ENCODE measurements at regions of chr10 and their contacts with region 1.

Region 1: DNA sequence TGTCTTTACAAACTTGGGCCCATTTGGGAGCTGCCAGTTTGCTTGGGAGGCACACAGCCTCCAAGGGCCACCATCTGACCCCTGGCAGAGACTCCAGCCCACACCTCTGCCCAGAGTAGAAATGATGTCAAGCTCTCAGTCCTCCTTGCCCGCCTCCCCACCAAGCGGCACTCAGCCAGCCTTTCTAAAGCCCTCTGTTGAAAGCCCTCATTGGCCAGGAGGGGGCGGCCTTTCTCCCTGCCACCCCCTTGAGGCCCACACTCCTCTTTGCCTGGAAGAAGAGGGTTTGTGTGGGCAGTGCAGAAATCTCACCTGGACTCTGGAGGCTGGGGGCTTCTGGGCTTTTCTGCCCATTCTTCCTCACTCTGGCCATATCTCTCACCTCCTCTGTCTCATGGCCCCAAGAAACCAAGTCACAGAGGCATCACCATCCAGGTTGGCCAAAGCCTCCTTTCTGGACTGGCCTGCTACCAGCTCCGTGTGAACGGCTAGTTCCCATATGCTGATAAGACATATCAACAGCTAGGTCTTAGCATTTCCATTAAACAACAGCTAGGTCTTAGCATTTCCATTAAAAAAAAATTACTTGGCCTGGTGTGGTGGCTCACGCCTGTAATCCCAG is 36.1 kb downstream of the UBTD1 start:
- DNase-seq: peak; percentile 10
- ATAC-seq: peak; percentile 59
- H3K4me3 ChIP-seq: no peak overlapping the region
- H3K27ac ChIP-seq: no peak overlapping the region
- H3K4me1 ChIP-seq: peaks cover 40% of the 10 kb centered on the region
- H3K27me3 ChIP-seq: no peaks in the 10 kb centered on the region
- CTCF ChIP-seq: peak; percentile 89

Region 2: GRCh38 chr10:96287392-96288105 is 1247.3 kb before region 1 on chr10:
- CTCF ChIA-PET with region 1: no interaction called
- POLR2A ChIA-PET with region 1: no interaction called
- in situ Hi-C with region 1: no loop called
- intact Hi-C with region 1: no loop called
- DNase-seq: no peak
- ATAC-seq: no peak
- H3K4me3 ChIP-seq: no peak overlapping the region
- H3K27ac ChIP-seq: no peak overlapping the region
- H3K4me1 ChIP-seq: no peaks in the 10 kb centered on the region
- H3K27me3 ChIP-seq: peaks cover 25% of the 10 kb centered on the region
- CTCF ChIP-seq: no peak

Region 3: DNA sequence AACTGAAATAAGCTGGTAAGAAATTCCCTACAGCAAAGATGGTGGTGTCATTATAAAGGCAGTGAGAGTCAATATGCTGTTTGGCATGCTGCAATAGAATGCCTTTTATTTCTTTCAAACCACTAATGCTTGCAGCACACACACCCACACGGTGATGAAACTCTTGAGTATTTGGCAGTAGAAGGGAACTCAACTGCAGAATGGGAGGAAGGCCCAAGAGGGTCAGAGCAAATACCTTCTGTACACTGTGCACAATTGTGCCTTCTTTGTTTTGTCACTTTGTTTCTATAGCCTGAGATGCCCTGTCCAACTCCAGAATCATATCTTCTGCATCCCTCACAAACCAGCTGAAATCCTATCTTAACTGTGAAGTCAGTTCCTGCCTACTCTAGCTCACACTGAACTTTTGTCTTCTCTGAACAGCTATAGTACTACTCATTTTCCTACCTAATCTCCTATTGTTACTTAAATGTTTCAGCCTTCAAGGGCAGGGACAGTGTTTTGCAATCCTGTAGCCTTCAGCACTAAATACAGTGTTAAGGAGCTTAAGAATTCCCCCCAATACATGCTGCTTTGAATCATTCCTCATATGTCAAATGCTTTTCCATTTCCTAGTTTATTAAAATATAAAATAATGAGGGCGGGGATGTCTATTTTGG is 58.8 kb before region 1 on chr10:
- CTCF ChIA-PET with region 1: no interaction called
- POLR2A ChIA-PET with region 1: no interaction called
- in situ Hi-C with region 1: no loop called
- intact Hi-C with region 1: no loop called
- DNase-seq: no peak
- ATAC-seq: no peak
- H3K4me3 ChIP-seq: no peak overlapping the region
- H3K27ac ChIP-seq: no peak overlapping the region
- H3K4me1 ChIP-seq: peaks cover 5% of the 10 kb centered on the region; the same call in 1 of the 2 replicates
- H3K27me3 ChIP-seq: no peaks in the 10 kb centered on the region
- CTCF ChIP-seq: no peak

Region 4: GRCh38 chr10:97520978-97521761 is 13.7 kb before region 1 on chr10:
- CTCF ChIA-PET with region 1: interaction called, 11 read pairs
- POLR2A ChIA-PET with region 1: no interaction called
- in situ Hi-C with region 1: no loop called
- intact Hi-C with region 1: no loop called
- DNase-seq: no peak
- ATAC-seq: no peak
- H3K4me3 ChIP-seq: no peak overlapping the region
- H3K27ac ChIP-seq: no peak overlapping the region
- H3K4me1 ChIP-seq: peaks cover 17% of the 10 kb centered on the region
- H3K27me3 ChIP-seq: no peaks in the 10 kb centered on the region
- CTCF ChIP-seq: no peak

Region 5: GRCh38 chr10:97553575-97554031 is 18.7 kb after region 1 on chr10:
- CTCF ChIA-PET with region 1: interaction called, 13 read pairs
- POLR2A ChIA-PET with region 1: no interaction called
- in situ Hi-C with region 1: no loop called
- intact Hi-C with region 1: no loop called
- DNase-seq: no peak
- ATAC-seq: peak; percentile 95
- H3K4me3 ChIP-seq: no peak overlapping the region
- H3K27ac ChIP-seq: peak overlapping the region; percentile 76
- H3K4me1 ChIP-seq: peaks cover 26% of the 10 kb centered on the region
- H3K27me3 ChIP-seq: no peaks in the 10 kb centered on the region
- CTCF ChIP-seq: peak; percentile 99

Region 6: DNA sequence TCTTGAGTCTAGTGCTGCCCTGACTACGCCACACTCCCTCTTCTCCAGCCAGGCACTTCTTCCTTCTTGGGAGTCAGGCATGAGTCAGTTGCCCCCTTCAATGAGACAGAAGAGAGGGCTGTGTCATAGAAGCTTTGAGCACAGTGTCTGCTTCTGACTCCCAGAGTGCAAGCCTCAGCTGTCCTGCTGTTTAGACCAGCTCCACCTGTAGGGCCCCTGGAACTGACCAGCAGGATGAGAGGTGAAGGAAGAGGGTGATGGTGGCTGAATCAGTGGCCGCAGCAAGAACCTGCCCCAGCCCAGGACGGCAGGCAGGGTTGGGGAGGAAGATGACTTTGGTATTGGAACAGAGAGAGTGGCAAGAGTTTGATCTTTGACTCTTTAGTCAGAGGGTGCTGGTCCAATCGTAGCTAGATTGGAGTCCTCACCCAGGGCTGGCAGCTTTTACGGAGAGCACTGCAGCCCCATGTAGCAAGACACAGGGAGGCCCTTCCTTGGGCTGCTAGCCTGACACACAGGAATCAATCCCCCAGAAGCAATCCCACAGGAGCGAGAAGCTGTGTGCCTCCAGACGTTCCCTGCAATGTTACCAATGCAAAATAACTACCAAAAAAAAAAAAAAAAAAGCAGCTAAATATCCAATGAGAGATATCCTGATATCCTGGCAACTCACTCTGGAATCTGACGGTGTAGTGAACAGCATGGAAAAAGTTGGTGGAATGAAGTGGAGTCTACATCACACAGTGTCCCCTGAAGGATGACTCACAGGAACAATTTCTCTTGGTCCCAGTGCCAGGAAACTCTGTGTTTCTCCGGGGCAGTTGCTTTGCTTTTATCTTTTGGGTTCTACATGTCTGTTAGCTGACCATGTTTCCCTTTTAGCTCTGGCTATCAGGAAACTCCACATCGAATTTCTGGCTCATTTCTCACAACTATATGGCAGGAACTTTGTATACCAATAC is 61.5 kb after region 1 on chr10:
- CTCF ChIA-PET with region 1: no interaction called
- POLR2A ChIA-PET with region 1: no interaction called
- in situ Hi-C with region 1: no loop called
- intact Hi-C with region 1: no loop called
- DNase-seq: no peak
- ATAC-seq: peak; percentile 85
- H3K4me3 ChIP-seq: no peak overlapping the region
- H3K27ac ChIP-seq: peak overlapping the region; percentile 66
- H3K4me1 ChIP-seq: peaks cover 14% of the 10 kb centered on the region; the same call in 1 of the 2 replicates
- H3K27me3 ChIP-seq: no peaks in the 10 kb centered on the region
- CTCF ChIP-seq: no peak